ENCODE measurements at regions of chr21 and their contacts with region 1.

Region 1: DNA sequence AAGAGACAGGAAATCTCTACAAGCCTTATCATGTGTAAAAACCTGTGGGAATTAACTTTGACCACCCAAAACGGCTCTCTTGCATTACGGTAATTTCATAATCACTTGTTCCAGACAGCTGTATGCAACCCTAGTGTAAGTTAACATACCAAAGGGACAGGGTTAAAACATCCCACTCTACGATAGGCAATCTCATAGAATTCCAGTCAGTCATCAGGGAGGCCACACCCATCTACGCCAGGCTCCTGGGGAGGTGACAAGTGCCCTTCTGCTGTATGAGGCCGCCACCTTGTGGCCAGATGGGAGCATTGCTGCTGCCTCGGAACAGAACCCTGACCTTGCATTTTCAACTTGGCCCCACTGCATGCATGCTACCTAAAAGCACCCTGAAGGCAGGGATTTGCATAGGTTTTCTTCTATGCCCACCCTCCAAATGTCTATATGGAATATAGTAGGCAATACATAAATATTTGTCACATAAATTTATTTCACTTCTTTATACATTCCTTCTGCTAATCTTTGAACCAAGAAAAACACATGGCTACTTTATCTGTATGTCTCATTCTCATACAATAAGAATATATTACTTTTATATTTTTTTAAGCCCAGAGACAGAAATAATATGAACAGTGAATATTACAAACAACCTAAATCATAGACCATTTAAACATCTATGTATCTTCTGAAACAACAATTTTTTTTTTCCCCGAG is 12.6 kb downstream of the HSF2BP start:
- DNase-seq: peak; percentile 89
- H3K4me3 ChIP-seq: peak overlapping the region in 1 of 2 experiments; percentile 22; a peak in 1 of 4 replicates
- H3K27ac ChIP-seq: peak overlapping the region in 1 of 2 experiments; percentile 69; a peak in 2 of 4 replicates
- H3K4me1 ChIP-seq: peaks cover 2 to 12% of the 10 kb centered on the region in 2 experiments; a peak in 3 of 4 replicates
- H3K27me3 ChIP-seq: no peaks in the 10 kb centered on the region
- CTCF ChIP-seq: peak; percentile 99
- EP300 ChIP-seq: no peak
- RAD21 ChIP-seq: peak; percentile 100

Region 2: GRCh38 chr21:43211072-43211759 is 435.5 kb before region 1 on chr21:
- CTCF ChIA-PET with region 1: interaction called, 11 read pairs
- POLR2A ChIA-PET with region 1: no interaction called
- DNase-seq: peak; percentile 61
- H3K4me3 ChIP-seq: no peak overlapping the region
- H3K27ac ChIP-seq: no peak overlapping the region
- H3K4me1 ChIP-seq: peaks cover 0 to 2% of the 10 kb centered on the region in 2 experiments; a peak in 1 of 4 replicates
- H3K27me3 ChIP-seq: no peaks in the 10 kb centered on the region; the same call in 1 of the 2 replicates
- CTCF ChIP-seq: peak; percentile 18; the same call in 1 of the 2 replicates
- EP300 ChIP-seq: no peak
- RAD21 ChIP-seq: peak; percentile 29; the same call in 1 of the 2 replicates

Region 3: GRCh38 chr21:43634618-43635017 is 12.1 kb before region 1 on chr21:
- CTCF ChIA-PET with region 1: interaction called, 11 read pairs
- POLR2A ChIA-PET with region 1: no interaction called
- DNase-seq: no peak
- H3K4me3 ChIP-seq: no peak overlapping the region
- H3K27ac ChIP-seq: no peak overlapping the region
- H3K4me1 ChIP-seq: no peaks in the 10 kb centered on the region
- H3K27me3 ChIP-seq: no peaks in the 10 kb centered on the region
- CTCF ChIP-seq: no peak
- EP300 ChIP-seq: no peak
- RAD21 ChIP-seq: no peak

Region 4: GRCh38 chr21:43797925-43798715 is 151.4 kb after region 1 on chr21:
- CTCF ChIA-PET with region 1: no interaction called
- POLR2A ChIA-PET with region 1: no interaction called
- DNase-seq: no peak
- H3K4me3 ChIP-seq: no peak overlapping the region
- H3K27ac ChIP-seq: no peak overlapping the region
- H3K4me1 ChIP-seq: no peaks in the 10 kb centered on the region
- H3K27me3 ChIP-seq: no peaks in the 10 kb centered on the region
- CTCF ChIP-seq: no peak
- EP300 ChIP-seq: no peak
- RAD21 ChIP-seq: no peak

Measured in SK-N-SH (cell line).